Gastrocnemius medialis (tissue), 4 donors: ENCODE measurements at regions of chr19 and their contacts with region 1.

Region 1: DNA sequence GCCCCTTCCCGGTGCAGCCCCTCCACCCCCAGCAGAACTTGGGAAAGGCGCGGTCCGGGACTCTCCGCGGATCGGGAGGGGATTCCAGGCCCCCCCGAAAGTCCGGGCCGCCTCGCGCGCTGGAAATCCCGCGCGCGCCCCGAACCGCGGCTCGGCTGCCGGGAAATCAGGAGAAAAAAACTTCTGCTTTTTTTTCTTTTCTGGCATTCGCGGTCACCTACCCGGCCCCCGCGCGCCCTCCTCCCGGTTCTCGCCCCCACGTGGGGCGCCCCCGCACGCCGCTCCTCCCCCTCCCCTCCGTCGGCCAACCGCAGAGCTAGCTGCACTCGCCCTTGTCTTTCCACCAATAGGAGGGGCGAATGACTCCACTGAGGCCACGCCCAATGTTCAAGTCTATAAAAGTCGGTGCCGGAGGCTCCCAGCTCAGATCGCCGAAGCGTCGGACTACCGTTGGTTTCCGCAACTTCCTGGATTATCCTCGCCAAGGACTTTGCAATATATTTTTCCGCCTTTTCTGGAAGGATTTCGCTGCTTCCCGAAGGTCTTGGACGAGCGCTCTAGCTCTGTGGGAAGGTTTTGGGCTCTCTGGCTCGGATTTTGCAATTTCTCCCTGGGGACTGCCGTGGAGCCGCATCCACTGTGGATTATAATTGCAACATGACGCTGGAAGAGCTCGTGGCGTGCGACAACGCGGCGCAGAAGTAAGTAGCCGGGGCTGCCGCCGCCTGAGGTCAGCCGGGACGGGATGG is at the start of gene GADD45B:
- DNase-seq: peak; percentile 95 to 96
- ATAC-seq: peak; percentile 85 to 86
- H3K4me3 ChIP-seq: peak within 1 kb of the TSS; percentile 66 to 92 (median 84)
- H3K27ac ChIP-seq: peak within 1 kb of the TSS; percentile 81 to 98 (median 90)
- H3K4me1 ChIP-seq: peaks cover 21 to 42% of the 10 kb centered on the region in 2 donors
- H3K27me3 ChIP-seq: no peaks in the 10 kb centered on the region
- CTCF ChIP-seq: peak in 1 of 5 experiments; percentile 15
- POLR2A ChIP-seq: peak; percentile 100
- total RNA-seq, gene GADD45B: 32.2 to 48.7 (median 41.7) TPM

Region 2: DNA sequence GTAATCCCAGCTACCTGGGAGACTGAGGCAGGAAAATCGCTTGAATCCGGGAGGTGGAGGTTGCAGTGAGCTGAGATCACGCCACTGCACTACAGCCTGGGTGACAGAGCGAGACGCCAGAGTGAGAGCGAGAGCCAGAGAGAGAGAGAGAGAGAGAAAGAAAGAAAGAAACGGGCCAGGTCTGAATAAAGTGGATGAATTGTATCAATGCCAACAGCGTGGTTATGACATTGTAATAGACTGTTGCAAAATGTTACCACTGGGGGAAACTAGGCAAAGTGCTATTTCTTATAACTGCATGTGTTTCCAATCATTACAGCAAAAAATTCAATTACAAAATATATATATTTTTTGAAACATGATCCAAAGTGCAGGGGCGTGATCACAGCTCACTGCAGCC is 448.5 kb before region 1 on chr19:
- in situ Hi-C with region 1: no loop called
- intact Hi-C with region 1: no loop called
- DNase-seq: peak in 1 of 2 donors; percentile 36
- ATAC-seq: peak in 1 of 2 donors; percentile 23
- H3K4me3 ChIP-seq: no peak overlapping the region
- H3K27ac ChIP-seq: peak overlapping the region; percentile 24 to 96 (median 66)
- H3K4me1 ChIP-seq: peaks cover 14 to 15% of the 10 kb centered on the region in 2 donors
- H3K27me3 ChIP-seq: no peaks in the 10 kb centered on the region
- CTCF ChIP-seq: no peak
- POLR2A ChIP-seq: no peak

Region 3: DNA sequence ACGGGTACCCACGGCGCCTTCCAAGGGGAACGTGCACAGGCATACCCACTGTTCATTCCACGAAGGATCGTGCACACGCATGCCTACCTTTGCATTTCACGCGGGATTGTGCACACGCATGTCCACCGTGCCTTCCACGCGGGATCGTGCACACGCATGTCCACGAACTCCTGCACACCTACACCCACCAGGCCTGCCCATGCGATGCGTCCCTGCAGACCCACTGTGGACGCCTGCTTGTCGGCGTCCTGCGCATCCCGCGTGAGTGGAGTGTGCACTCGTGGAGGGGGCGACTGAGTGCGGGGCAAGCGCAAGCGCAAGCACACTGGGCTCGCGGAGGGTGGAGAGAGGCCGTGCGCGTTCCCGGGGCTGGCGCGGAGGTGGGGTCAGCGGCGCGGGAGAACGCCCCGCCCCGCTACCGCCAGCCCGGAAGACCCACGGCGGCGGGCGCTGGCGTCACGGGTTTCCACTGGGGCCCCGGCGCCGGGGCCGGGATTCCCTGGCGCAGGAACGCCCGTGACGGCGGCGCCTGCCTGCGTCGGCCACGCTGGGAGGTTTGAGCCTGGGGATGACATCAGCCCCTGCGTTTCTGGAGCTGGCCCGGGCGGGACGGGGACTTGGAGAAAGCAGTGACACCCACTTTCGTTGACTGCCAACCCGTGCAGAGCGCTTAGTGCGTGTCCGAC is 18.7 kb after region 1 on chr19:
- in situ Hi-C with region 1: no loop called
- intact Hi-C with region 1: loop called (anchors 2 kb)
- DNase-seq: peak; percentile 46 to 71
- ATAC-seq: peak; percentile 50 to 57
- H3K4me3 ChIP-seq: peak overlapping the region; percentile 57 to 80 (median 60)
- H3K27ac ChIP-seq: peak overlapping the region; percentile 89 to 95 (median 91)
- H3K4me1 ChIP-seq: peaks cover 27 to 45% of the 10 kb centered on the region in 2 donors
- H3K27me3 ChIP-seq: no peaks in the 10 kb centered on the region
- CTCF ChIP-seq: no peak
- POLR2A ChIP-seq: peak in 1 of 2 donors; percentile 15

Region 4: DNA sequence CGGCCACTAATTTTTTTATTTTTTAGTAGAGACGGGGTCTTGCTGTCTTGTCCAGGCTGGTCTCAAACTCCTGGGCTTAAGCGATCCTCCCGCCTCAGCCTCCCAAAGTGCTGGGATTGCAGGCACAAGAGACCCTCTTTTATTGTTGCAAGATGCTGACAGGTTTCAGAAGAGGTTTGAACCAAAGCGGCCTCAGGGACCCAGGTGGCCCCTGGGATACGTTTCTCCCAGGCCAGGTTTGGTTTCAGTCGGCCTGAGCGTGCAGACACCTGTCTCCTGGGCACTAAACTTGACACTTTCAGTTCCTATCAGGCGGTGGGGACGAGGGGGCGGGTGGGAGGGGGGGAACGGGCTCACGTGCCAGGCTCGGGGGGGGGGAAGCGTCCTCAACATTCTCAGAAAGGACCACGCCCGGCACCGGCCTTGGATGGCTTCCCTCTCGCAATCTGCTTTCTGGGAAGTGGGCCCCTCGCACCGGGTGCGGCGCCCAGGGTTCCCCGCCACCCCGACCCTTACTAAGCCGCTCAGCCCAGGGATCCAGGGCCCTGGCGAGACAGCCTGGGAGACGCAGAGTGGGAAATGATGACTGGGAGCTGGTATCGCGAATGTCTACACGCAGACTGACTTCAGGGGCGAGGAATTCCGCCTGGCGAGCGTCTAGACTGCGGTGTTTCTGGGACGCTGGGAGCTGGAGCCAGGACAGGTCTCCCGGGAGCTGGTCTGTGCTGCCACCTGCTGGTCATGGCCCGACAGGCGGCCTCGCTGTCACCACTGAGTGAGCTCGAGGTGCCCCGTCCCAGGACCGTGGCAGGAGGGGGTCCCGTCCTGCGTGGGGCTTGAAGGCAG is 135.0 kb after region 1 on chr19:
- in situ Hi-C with region 1: loop called in 3 of 4 experiments (anchors 10 kb)
- intact Hi-C with region 1: loop called (anchors 1 kb)
- DNase-seq: peak; percentile 80 to 83
- ATAC-seq: peak; percentile 95 to 96
- H3K4me3 ChIP-seq: peak overlapping the region; percentile 52 to 88 (median 64)
- H3K27ac ChIP-seq: peak overlapping the region; percentile 72 to 84 (median 84)
- H3K4me1 ChIP-seq: no peaks in the 10 kb centered on the region
- H3K27me3 ChIP-seq: no peaks in the 10 kb centered on the region
- CTCF ChIP-seq: peak; percentile 94 to 99 (median 99)
- POLR2A ChIP-seq: peak in 1 of 2 donors; percentile 13